Tibial artery (tissue), 4 donors: ENCODE measurements at regions of chr6 and their contacts with region 1.

Region 1: DNA sequence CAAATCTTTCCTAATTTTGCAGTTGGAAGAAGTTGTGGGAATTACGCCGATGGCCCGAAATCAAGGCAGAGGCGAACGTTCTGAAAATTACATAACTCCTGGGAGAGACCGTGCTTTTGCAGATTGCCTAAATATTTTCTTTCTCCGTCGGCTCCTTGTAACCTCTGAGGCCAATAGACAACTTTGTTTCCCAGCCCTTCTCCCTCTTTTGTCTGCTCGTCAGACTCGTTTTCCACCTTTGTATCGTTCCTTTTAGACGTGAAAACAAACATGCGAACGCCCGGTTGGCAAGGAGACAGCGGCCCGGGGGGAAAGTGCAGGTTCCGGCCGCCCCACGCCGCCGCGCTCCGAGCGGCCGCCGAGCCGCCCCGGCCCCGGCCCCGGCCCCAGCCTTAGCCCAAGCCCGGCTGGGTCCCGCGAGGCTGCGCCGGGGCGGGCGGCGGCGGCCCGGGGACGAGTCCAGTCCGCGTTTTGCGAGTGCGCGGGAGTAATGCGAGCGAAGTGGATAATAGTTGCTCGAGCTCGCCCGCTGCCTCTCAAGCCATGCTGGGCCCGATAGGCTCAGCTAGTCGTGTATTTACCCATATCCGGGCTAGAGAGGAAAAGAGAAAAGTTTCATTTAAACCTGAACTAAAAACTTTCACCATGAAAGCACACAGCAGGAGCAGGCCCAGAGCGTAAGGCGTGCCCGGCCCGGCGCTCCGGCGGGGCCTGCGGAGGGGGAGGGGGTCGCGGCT is at the start of gene ARID1B:
- DNase-seq: peak; percentile 82 to 91
- H3K4me3 ChIP-seq: peak within 1 kb of the TSS; percentile 86 to 96
- H3K27ac ChIP-seq: peak within 1 kb of the TSS; percentile 96 to 98
- H3K4me1 ChIP-seq: peaks cover 5 to 35% (median 25%) of the 10 kb centered on the region in 4 donors
- H3K27me3 ChIP-seq: no peaks in the 10 kb centered on the region
- CTCF ChIP-seq: no peak

Region 2: GRCh38 chr6:156686995-156687788 is 89.8 kb before region 1 on chr6:
- intact Hi-C with region 1: loop called (anchors 1 kb)
- DNase-seq: peak; percentile 92 to 98
- H3K4me3 ChIP-seq: peak overlapping the region; percentile 73 to 84
- H3K27ac ChIP-seq: peak overlapping the region; percentile 87 to 93
- H3K4me1 ChIP-seq: peaks cover 0 to 18% (median 11%) of the 10 kb centered on the region in 4 donors
- H3K27me3 ChIP-seq: no peaks in the 10 kb centered on the region
- CTCF ChIP-seq: no peak

Region 3: GRCh38 chr6:156719720-156720563 is 57.1 kb before region 1 on chr6:
- intact Hi-C with region 1: loop called (anchors 5 kb)
- DNase-seq: peak; percentile 97 to 98
- H3K4me3 ChIP-seq: peak overlapping the region; percentile 40 to 52
- H3K27ac ChIP-seq: peak overlapping the region; percentile 87 to 94
- H3K4me1 ChIP-seq: peaks cover 0 to 30% (median 22%) of the 10 kb centered on the region in 4 donors
- H3K27me3 ChIP-seq: no peaks in the 10 kb centered on the region
- CTCF ChIP-seq: no peak

Region 4: DNA sequence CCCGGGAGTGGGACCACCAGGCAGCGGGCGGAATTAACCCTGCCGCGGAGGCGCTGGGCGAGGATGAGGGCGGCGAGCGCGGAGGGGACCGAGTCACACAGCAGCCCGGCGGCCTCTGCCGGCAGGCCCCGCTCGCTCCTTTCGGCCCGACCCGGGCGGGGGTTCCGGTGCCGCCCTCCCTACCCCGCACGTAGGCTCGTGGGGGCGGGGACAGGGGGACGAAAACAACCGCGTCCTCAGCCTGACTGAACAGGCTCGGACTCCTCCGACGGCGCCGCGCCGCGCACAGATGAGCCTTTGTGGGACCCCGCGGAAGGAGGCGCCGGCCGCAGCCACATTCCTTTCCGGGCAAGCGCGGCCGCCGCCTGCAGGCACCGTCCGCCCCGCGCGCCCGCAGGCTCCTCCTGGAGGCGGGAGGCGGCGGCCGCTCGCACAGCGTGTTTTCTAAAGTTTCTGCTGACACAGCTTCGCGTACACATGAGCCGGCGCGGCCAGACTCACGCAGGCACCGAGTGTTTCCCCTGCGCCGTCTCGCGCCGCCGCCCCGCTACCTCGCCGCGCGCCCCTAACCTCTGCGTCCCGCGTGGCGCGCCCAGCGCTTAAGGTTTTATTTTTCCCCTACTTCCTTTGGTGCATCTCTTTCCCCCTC is 244.5 kb after region 1 on chr6:
- intact Hi-C with region 1: loop called (anchors 5 kb)
- DNase-seq: peak; percentile 94 to 96
- H3K4me3 ChIP-seq: peak overlapping the region; percentile 68 to 90
- H3K27ac ChIP-seq: peak overlapping the region; percentile 95 to 98
- H3K4me1 ChIP-seq: peaks cover 3 to 59% (median 20%) of the 10 kb centered on the region in 4 donors
- H3K27me3 ChIP-seq: no peaks in the 10 kb centered on the region
- CTCF ChIP-seq: peak; percentile 40

Region 5: GRCh38 chr6:157184202-157185020 is 407.4 kb after region 1 on chr6:
- intact Hi-C with region 1: loop called (anchors 10 kb)
- DNase-seq: peak; percentile 67 to 84
- H3K4me3 ChIP-seq: peak overlapping the region; percentile 19 to 20
- H3K27ac ChIP-seq: peak overlapping the region; percentile 27 to 31
- H3K4me1 ChIP-seq: peaks cover 0 to 23% (median 13%) of the 10 kb centered on the region in 4 donors
- H3K27me3 ChIP-seq: no peaks in the 10 kb centered on the region
- CTCF ChIP-seq: peak; percentile 93 to 97